ENCODE measurements at regions of chr12 and their contacts with region 1.

Region 1: DNA sequence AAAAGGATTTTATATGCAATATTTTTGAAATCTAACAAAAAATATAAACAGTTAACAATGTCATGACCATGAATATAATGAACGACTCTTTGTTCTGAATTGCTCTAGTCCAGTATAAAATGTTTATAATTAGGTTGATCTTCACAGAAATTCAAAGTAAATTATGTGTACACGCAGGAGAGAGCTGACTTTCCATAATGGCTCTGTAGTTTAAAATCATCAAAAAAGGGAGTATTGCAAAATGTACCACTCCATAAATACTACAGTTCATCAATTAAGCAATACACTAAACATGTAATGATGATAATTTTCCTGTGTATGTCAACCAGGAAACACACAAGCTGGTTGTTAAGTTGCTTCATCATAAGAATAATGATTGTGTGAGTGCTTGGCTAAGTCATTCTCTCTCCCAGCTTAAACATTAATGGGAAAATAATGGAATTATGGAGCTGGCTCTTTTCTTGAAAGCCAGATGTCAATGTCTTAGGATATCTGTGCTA is 189.5 kb upstream of the PLEKHG7 start:
- DNase-seq: no peak
- ATAC-seq: no peak
- H3K4me3 ChIP-seq: no peak overlapping the region
- H3K4me3 Mint-ChIP-seq: no peak overlapping the region
- H3K27ac ChIP-seq: no peak overlapping the region
- H3K27ac Mint-ChIP-seq: no peak overlapping the region
- H3K4me1 ChIP-seq: no peaks in the 10 kb centered on the region
- H3K4me1 Mint-ChIP-seq: peaks cover 0 to 6% (median 5%) of the 10 kb centered on the region in 3 donors
- H3K27me3 ChIP-seq: no peaks in the 10 kb centered on the region
- H3K27me3 Mint-ChIP-seq: no peaks in the 10 kb centered on the region

Region 2: DNA sequence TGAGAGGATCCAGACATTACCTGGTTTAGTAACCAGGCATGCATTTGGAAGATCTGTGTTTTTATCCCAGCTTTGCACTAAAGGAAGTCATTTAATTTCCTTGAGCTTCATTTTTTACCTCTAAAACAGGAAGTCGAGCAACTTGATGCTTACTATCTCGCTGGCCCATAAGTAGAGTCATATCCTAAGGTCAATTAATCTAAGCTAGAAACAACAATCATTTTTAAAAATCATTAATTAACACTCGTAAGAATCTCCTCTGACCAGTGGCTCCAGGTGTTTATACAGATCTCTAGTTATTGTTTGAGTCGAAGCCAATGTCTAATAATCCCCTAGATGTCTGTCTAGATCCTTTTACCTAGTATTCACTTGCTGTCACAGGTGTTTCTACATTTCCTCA is 974.9 kb before region 1 on chr12:
- CTCF ChIA-PET with region 1: no interaction called
- POLR2A ChIA-PET with region 1: interaction called in 1 of 2 experiments, 18 read pairs
- DNase-seq: no peak
- ATAC-seq: no peak
- H3K4me3 ChIP-seq: no peak overlapping the region
- H3K4me3 Mint-ChIP-seq: no peak overlapping the region
- H3K27ac ChIP-seq: no peak overlapping the region
- H3K27ac Mint-ChIP-seq: no peak overlapping the region
- H3K4me1 ChIP-seq: no peaks in the 10 kb centered on the region
- H3K4me1 Mint-ChIP-seq: peaks cover 0 to 12% (median 9%) of the 10 kb centered on the region in 3 donors
- H3K27me3 ChIP-seq: no peaks in the 10 kb centered on the region
- H3K27me3 Mint-ChIP-seq: peaks cover 0 to 5% of the 10 kb centered on the region in 2 donors

Region 3: DNA sequence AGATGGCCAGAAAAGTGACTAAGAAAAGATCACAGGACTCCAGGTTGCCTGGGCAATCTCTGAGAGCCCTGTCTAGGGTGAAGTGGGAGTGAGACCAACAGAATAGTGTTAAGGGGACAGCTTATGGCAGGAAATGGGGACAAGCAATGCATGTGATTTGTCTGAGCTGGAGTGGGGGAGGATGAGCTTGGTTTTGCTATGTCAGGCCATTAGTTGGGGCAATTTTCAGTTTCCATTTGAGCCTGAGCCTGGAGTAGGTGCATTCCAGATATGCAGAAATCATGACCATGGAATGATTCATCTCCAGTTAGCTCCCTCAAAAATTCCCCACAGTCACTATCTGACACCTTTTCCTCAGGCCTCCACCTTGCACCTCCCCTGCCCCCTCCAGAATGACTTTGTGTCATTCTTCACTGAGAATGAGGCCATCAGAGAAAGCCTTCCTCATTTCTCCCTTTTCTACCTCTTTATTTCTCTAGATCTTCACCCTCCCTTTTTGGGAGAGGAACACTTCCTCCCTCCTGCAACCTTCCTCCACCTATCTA is 38.6 kb after region 1 on chr12:
- CTCF ChIA-PET with region 1: no interaction called
- POLR2A ChIA-PET with region 1: no interaction called
- DNase-seq: no peak
- ATAC-seq: no peak
- H3K4me3 ChIP-seq: no peak overlapping the region
- H3K4me3 Mint-ChIP-seq: no peak overlapping the region
- H3K27ac ChIP-seq: no peak overlapping the region
- H3K27ac Mint-ChIP-seq: no peak overlapping the region
- H3K4me1 ChIP-seq: peaks cover 10 to 22% of the 10 kb centered on the region in 2 experiments
- H3K4me1 Mint-ChIP-seq: peaks cover 25 to 29% (median 25%) of the 10 kb centered on the region in 3 donors
- H3K27me3 ChIP-seq: no peaks in the 10 kb centered on the region
- H3K27me3 Mint-ChIP-seq: no peaks in the 10 kb centered on the region